ENCODE measurements at regions of chr4 and their contacts with region 1.

Region 1: DNA sequence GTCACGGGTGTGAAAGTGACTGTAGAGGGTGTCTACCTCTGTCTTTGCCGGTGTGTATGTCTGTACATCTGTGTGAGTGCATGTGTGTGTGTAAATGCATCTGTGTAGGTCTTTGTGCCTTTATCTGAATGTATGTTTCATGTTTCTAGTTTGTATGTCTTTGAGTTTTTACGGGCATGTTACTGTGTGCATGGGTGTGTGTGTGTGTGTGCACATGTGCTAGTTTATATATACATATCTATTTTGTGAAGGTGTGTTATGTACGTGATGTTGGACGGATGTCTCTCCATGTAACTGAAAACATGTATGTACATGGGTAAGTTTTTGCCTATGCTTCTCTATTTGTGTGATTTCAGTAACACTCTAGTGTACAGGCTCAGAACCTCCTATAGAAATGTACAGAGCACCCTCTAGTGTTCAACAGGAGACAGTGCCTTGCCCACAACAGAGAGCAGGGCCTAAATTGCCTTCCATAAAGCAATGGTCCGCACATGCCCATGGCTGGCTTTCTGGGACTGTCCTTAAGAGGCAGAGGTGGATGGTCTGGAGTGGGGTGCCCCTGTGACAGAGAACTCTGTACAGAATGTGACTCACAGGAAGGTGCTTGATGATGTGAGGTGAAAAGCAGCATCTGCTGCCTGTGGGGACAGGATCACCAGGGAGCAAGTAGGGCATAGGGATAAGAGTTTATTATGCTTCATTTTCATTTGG is 343.5 kb downstream of the RAPGEF2 start:
- DNase-seq: peak; percentile 22
- H3K4me3 Mint-ChIP-seq: no peak overlapping the region
- H3K27ac Mint-ChIP-seq: no peak overlapping the region
- H3K4me1 Mint-ChIP-seq: no peaks in the 10 kb centered on the region
- H3K27me3 Mint-ChIP-seq: no peaks in the 10 kb centered on the region
- CTCF ChIP-seq: peak; percentile 44

Region 2: GRCh38 chr4:158856852-158857251 is 589.6 kb before region 1 on chr4:
- CTCF ChIA-PET with region 1: no interaction called
- intact Hi-C with region 1: loop called (anchors 5 kb)
- DNase-seq: no peak
- H3K4me3 Mint-ChIP-seq: no peak overlapping the region
- H3K27ac Mint-ChIP-seq: no peak overlapping the region
- H3K4me1 Mint-ChIP-seq: no peaks in the 10 kb centered on the region
- H3K27me3 Mint-ChIP-seq: no peaks in the 10 kb centered on the region
- CTCF ChIP-seq: no peak

Region 3: DNA sequence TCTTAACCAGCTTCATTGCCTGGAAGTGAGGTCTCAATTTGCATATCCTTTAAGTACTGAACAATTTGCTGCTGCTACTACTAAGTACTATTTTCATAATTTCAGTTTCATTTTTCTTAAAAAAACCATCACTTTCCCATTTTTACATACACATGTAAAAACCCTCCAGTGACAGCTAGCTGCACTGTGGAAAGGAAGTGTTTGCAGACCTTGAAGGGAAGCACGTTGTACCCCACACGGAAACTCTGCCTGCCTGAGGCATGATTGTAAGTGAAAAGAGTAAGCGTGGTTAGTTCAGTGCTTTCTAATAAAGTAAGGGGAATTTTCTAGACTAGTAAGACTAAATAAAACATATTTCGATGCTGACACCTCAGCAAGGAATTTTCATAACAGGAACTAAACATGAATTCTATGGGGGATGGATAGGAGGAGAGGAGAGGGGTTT is 240.0 kb before region 1 on chr4:
- CTCF ChIA-PET with region 1: no interaction called
- intact Hi-C with region 1: loop called (anchors 10 kb)
- DNase-seq: no peak
- H3K4me3 Mint-ChIP-seq: no peak overlapping the region
- H3K27ac Mint-ChIP-seq: no peak overlapping the region
- H3K4me1 Mint-ChIP-seq: no peaks in the 10 kb centered on the region
- H3K27me3 Mint-ChIP-seq: no peaks in the 10 kb centered on the region
- CTCF ChIP-seq: no peak

Region 4: DNA sequence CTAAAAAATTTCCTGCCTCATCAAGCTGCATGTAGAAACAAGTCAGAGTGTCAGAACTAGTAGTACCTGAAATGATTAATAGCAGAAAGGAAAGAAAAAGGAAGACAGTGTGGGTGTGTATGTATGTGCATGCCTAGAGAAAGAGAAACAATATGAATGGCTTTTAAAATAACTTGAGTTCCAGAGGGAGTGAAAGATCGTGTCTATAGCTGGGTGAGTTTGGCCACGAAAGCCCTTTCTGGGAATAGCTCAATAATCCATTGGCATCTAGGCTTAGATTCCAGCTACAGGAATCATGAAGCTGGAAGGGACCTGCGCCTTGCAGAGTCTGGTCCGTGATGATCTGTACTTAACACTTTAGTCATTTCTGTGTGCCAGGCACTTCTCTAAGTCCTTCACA is 147.9 kb before region 1 on chr4:
- CTCF ChIA-PET with region 1: no interaction called
- intact Hi-C with region 1: loop called (anchors 5 kb)
- DNase-seq: no peak
- H3K4me3 Mint-ChIP-seq: no peak overlapping the region
- H3K27ac Mint-ChIP-seq: peak overlapping the region; percentile 16
- H3K4me1 Mint-ChIP-seq: peaks cover 40% of the 10 kb centered on the region
- H3K27me3 Mint-ChIP-seq: no peaks in the 10 kb centered on the region
- CTCF ChIP-seq: no peak